PC-3 (cell line): ENCODE measurements at regions of chr6 and their contacts with region 1.

Region 1: GRCh38 chr6:136669299-136669699 is 119.1 kb upstream of the MAP7 start:
- DNase-seq: peak; percentile 85
- ATAC-seq: peak; percentile 88
- H3K4me3 ChIP-seq: peak overlapping the region; percentile 32; the same call in 1 of the 2 replicates
- H3K27ac ChIP-seq: peak overlapping the region; percentile 59
- H3K4me1 ChIP-seq: peaks cover 30% of the 10 kb centered on the region
- H3K27me3 ChIP-seq: no peaks in the 10 kb centered on the region
- CTCF ChIP-seq: no peak

Region 2: GRCh38 chr6:136719280-136720044 is 50.2 kb after region 1 on chr6:
- CTCF ChIA-PET with region 1: no interaction called
- POLR2A ChIA-PET with region 1: no interaction called
- intact Hi-C with region 1: loop called (anchors 10 kb)
- DNase-seq: no peak
- ATAC-seq: no peak
- H3K4me3 ChIP-seq: no peak overlapping the region
- H3K27ac ChIP-seq: no peak overlapping the region
- H3K4me1 ChIP-seq: no peaks in the 10 kb centered on the region
- H3K27me3 ChIP-seq: no peaks in the 10 kb centered on the region
- CTCF ChIP-seq: no peak